ENCODE measurements at regions of chr6 and their contacts with region 1.

Region 1: GRCh38 chr6:26270903-26271667 is 93.9 kb upstream of the BTN3A2 start:
- DNase-seq: peak; percentile 92
- H3K4me3 ChIP-seq: peak overlapping the region; percentile 43 to 45 (median 44)
- H3K27ac ChIP-seq: peak overlapping the region; percentile 75
- H3K4me1 ChIP-seq: peaks cover 11% of the 10 kb centered on the region
- H3K27me3 ChIP-seq: no peaks in the 10 kb centered on the region
- CTCF ChIP-seq: no peak

Region 2: DNA sequence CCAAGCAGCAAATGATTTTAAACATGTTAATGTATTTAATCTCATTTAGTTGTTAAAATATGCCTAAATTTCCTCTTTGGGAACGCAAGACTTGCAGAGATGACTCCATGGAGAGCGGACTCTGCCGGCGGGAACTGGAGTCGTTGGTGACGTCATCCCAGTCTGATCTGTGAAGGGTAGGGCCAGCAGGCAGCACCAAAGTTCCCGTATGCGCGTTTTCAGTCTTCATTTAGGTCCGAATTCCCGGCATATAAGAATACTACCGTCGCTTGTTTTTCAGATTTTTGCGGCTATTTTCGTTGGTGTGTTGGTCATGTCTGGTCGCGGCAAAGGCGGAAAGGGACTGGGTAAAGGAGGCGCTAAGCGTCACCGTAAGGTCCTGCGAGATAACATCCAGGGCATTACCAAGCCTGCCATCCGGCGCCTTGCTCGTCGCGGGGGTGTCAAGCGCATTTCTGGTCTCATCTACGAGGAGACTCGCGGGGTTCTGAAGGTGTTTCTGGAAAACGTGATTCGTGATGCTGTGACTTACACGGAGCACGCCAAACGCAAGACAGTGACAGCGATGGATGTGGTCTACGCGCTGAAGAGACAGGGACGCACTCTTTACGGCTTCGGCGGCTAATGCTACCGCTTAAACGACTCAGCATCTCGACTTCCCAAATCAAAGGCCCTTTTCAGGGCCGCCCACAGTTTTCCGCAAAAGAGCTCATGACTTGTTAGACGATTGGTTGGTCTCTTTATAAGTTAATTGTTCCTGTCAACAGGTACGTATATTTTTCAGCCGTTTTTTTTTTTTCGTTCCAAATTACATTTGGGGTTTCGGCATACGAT is 66.5 kb before region 1 on chr6:
- CTCF ChIA-PET with region 1: no interaction called
- dilution Hi-C with region 1: no loop called
- in situ Hi-C with region 1: no loop called
- intact Hi-C with region 1: loop called (anchors 1 kb)
- DNase-seq: peak; percentile 95
- H3K4me3 ChIP-seq: peak overlapping the region; percentile 67 to 73 (median 71)
- H3K27ac ChIP-seq: peak overlapping the region; percentile 97
- H3K4me1 ChIP-seq: peaks cover 19% of the 10 kb centered on the region
- H3K27me3 ChIP-seq: no peaks in the 10 kb centered on the region
- CTCF ChIP-seq: peak; percentile 11 to 36

Region 3: GRCh38 chr6:26223650-26224546 is 47.2 kb before region 1 on chr6:
- CTCF ChIA-PET with region 1: no interaction called
- dilution Hi-C with region 1: no loop called
- in situ Hi-C with region 1: loop called in 1 of 2 experiments (anchors 5 kb)
- intact Hi-C with region 1: loop called (anchors 1 kb)
- DNase-seq: peak; percentile 91
- H3K4me3 ChIP-seq: peak overlapping the region; percentile 57 to 76 (median 68)
- H3K27ac ChIP-seq: peak overlapping the region; percentile 98
- H3K4me1 ChIP-seq: peaks cover 8% of the 10 kb centered on the region
- H3K27me3 ChIP-seq: no peaks in the 10 kb centered on the region
- CTCF ChIP-seq: no peak

Region 4: DNA sequence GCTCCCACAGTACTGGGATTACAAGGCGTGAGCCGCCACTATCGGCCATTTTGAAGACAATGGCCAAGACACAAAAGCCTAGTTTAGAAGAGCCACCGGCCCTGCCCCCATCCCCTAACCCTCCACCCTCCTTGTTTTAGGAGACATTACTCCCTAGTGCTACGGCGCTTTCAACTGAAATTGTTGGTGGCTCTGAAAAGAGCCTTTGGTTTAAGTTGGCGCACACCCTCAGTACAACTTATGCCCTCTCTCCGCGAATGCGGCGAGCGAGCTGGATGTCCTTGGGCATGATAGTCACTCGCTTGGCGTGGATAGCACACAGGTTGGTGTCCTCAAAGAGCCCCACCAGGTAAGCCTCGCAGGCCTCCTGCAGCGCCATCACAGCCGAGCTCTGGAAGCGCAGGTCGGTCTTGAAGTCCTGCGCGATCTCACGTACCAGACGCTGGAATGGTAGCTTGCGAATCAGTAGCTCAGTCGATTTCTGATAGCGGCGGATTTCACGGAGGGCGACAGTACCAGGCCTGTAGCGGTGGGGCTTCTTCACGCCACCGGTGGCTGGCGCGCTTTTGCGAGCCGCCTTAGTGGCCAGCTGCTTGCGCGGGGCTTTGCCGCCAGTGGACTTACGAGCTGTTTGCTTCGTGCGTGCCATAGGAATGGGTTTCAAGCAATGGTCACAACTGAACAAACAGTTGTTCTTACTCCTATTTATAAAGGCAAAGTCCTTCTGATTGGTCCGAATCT is 21.0 kb before region 1 on chr6:
- CTCF ChIA-PET with region 1: interaction called, 16 read pairs
- dilution Hi-C with region 1: no loop called
- in situ Hi-C with region 1: no loop called
- intact Hi-C with region 1: loop called (anchors 1 kb)
- DNase-seq: peak; percentile 84
- H3K4me3 ChIP-seq: peak overlapping the region; percentile 62 to 71 (median 69)
- H3K27ac ChIP-seq: peak overlapping the region; percentile 53
- H3K4me1 ChIP-seq: peaks cover 8% of the 10 kb centered on the region
- H3K27me3 ChIP-seq: no peaks in the 10 kb centered on the region
- CTCF ChIP-seq: peak; percentile 37 to 68

Region 5: GRCh38 chr6:26322645-26323482 is 51.8 kb after region 1 on chr6:
- CTCF ChIA-PET with region 1: no interaction called
- dilution Hi-C with region 1: no loop called
- in situ Hi-C with region 1: no loop called
- intact Hi-C with region 1: loop called (anchors 2 kb)
- DNase-seq: peak; percentile 90
- H3K4me3 ChIP-seq: peak overlapping the region; percentile 54 to 87 (median 60)
- H3K27ac ChIP-seq: peak overlapping the region; percentile 34
- H3K4me1 ChIP-seq: no peaks in the 10 kb centered on the region
- H3K27me3 ChIP-seq: no peaks in the 10 kb centered on the region
- CTCF ChIP-seq: no peak